ENCODE measurements at regions of chr2 and their contacts with region 1.

Region 1: GRCh38 chr2:118186110-118186857 is 98.0 kb downstream of the INSIG2 start:
- DNase-seq: peak; percentile 95
- H3K4me3 Mint-ChIP-seq: peak overlapping the region; percentile 89
- H3K27ac Mint-ChIP-seq: peak overlapping the region; percentile 96
- H3K4me1 Mint-ChIP-seq: peaks cover 25% of the 10 kb centered on the region
- H3K27me3 Mint-ChIP-seq: no peaks in the 10 kb centered on the region

Region 2: DNA sequence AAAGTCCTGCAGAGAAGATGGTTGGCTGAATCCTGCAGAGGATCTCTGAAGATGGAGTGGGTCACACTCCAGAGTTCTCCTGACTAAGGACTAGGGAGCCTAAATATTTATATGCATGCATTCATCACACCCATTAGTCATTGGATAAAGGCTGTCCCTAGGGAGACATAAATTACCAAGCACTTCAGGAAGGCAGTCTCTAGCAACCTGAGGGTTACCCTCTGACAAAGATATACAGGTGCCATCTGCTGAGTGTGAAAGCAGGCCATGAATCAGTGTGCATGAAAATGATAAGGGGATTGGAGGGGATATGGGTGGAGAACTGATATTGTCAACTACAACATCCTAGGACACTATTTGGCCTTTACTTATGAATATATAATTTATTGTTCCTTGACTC is 666.6 kb before region 1 on chr2:
- intact Hi-C with region 1: no loop called
- DNase-seq: no peak
- H3K4me3 Mint-ChIP-seq: no peak overlapping the region
- H3K27ac Mint-ChIP-seq: no peak overlapping the region
- H3K4me1 Mint-ChIP-seq: no peaks in the 10 kb centered on the region
- H3K27me3 Mint-ChIP-seq: no peaks in the 10 kb centered on the region

Region 3: GRCh38 chr2:117814417-117815264 is 371.6 kb before region 1 on chr2 and contains the start of gene DDX18:
- intact Hi-C with region 1: loop called (anchors 2 kb)
- DNase-seq: peak; percentile 99
- H3K4me3 Mint-ChIP-seq: peak within 1 kb of the TSS; percentile 97
- H3K27ac Mint-ChIP-seq: peak within 1 kb of the TSS; percentile 95
- H3K4me1 Mint-ChIP-seq: peaks cover 30% of the 10 kb centered on the region
- H3K27me3 Mint-ChIP-seq: no peaks in the 10 kb centered on the region
- total RNA-seq, gene DDX18: 150 and 157 TPM in 2 replicates

Region 4: DNA sequence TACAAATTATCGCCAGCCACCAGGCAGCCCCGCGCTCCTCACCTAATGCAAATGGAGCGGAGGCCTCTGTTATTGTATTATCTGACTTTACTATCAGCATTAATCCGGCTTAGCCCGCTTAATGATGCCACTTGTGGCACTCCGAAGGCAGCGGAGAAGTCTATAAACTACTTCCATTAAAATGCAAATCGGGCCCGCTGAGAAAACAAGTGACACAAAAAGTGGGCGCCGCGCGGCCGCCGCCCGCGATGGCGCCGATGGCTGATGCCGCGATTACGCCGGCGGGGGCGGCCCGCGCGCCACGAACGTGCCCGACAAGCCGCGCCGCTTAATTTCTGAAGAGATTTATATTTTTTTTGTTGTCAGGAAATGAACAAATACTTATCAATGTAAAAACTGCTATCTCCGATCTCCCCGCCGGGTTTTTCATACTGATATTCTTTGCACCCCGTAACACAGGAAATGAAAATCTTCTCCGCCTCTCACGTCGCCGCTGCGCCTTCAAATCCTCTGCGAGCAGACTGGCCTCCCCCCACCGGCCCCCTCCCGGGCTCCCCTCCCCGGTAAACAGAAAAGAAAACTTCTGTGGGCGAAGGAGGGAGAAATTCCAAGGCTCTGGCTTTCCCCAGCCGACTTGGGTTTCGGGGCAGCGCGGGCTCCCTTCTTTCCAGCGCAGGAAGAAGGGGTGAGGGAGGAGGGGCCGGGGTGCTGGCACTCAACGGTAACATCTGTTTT is 123.8 kb after region 1 on chr2:
- intact Hi-C with region 1: loop called (anchors 5 kb)
- DNase-seq: peak; percentile 90
- H3K4me3 Mint-ChIP-seq: peak overlapping the region; percentile 84
- H3K27ac Mint-ChIP-seq: peak overlapping the region; percentile 93
- H3K4me1 Mint-ChIP-seq: peaks cover 5% of the 10 kb centered on the region
- H3K27me3 Mint-ChIP-seq: peaks cover 17% of the 10 kb centered on the region

Measured in activated CD4-positive, alpha-beta T cell treated with anti-CD3 and anti-CD28 coated beads, Interleukin-2, amount 10 ng/mL, durations not matched to agents 24 days and 14 days (primary cell).